Endothelial cell of umbilical vein (primary cell): ENCODE measurements at regions of chr12 and their contacts with region 1.

Region 1: GRCh38 chr12:51341259-51342007 is 5.0 kb downstream of the CELA1 start:
- DNase-seq: peak; percentile 81
- H3K4me3 ChIP-seq: peak overlapping the region in 1 of 3 experiments; percentile 13
- H3K27ac ChIP-seq: no peak overlapping the region
- H3K4me1 ChIP-seq: no peaks in the 10 kb centered on the region
- H3K27me3 ChIP-seq: no peaks in the 10 kb centered on the region
- CTCF ChIP-seq: peak; percentile 85 to 99
- POLR2A ChIP-seq: no peak

Region 2: DNA sequence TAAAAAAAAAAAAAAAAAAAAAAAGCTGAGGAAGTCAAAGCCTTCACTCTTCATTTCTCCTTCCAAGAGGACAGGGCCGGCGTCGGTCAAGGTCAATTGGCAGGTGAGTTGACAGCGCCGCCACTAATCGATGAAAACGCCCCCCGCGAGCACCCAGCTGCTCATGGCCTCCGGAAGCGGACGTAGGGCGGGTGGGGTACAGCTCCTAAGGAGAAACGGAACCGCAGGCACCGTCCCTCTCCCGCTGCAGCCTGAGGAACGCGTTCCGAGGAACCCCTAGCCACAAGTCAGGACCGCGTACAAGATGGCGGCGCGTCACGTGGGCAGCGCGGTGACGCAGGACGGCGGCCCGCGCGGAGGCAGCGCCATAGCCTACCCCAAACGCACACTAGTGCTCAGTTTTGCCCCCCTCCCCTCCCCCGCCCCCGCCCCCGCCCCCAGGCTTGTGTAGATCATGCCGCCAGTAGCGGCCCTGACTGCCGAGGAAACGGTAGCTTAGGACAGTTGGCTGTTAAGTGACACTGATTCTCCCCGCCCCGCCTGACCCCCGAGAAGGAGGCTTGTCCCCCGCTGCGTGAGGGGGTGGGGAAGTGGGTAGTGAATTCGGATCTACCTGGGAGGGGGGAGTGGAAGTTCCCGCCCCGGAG is 577.7 kb before region 1 on chr12 and contains the start of gene ATF1:
- CTCF ChIA-PET with region 1: interaction called, 35 read pairs
- POLR2A ChIA-PET with region 1: no interaction called
- dilution Hi-C with region 1: no loop called
- intact Hi-C with region 1: loop called (anchors 1 kb)
- DNase-seq: peak; percentile 93
- H3K4me3 ChIP-seq: peak within 1 kb of the TSS; percentile 56 to 88 (median 61)
- H3K27ac ChIP-seq: peak within 1 kb of the TSS; percentile 59
- H3K4me1 ChIP-seq: peaks cover 11% of the 10 kb centered on the region
- H3K27me3 ChIP-seq: no peaks in the 10 kb centered on the region
- CTCF ChIP-seq: no peak
- POLR2A ChIP-seq: peak; percentile 91
- total RNA-seq, gene ATF1: 26.7 and 26.9 TPM in 2 replicates

Region 3: GRCh38 chr12:51025836-51026638 is 315.4 kb before region 1 on chr12 and contains the start of gene SLC11A2:
- CTCF ChIA-PET with region 1: interaction called, 16 read pairs
- POLR2A ChIA-PET with region 1: no interaction called
- dilution Hi-C with region 1: no loop called
- intact Hi-C with region 1: no loop called
- DNase-seq: peak; percentile 95
- H3K4me3 ChIP-seq: peak within 1 kb of the TSS; percentile 64 to 79 (median 78)
- H3K27ac ChIP-seq: peak within 1 kb of the TSS; percentile 90
- H3K4me1 ChIP-seq: peaks cover 17% of the 10 kb centered on the region
- H3K27me3 ChIP-seq: peaks cover 5 to 7% of the 10 kb centered on the region in 2 experiments
- CTCF ChIP-seq: peak in 1 of 2 donors; percentile 31
- POLR2A ChIP-seq: peak; percentile 73
- total RNA-seq, gene SLC11A2: 41.1 and 56.4 TPM in 2 replicates

Region 4: DNA sequence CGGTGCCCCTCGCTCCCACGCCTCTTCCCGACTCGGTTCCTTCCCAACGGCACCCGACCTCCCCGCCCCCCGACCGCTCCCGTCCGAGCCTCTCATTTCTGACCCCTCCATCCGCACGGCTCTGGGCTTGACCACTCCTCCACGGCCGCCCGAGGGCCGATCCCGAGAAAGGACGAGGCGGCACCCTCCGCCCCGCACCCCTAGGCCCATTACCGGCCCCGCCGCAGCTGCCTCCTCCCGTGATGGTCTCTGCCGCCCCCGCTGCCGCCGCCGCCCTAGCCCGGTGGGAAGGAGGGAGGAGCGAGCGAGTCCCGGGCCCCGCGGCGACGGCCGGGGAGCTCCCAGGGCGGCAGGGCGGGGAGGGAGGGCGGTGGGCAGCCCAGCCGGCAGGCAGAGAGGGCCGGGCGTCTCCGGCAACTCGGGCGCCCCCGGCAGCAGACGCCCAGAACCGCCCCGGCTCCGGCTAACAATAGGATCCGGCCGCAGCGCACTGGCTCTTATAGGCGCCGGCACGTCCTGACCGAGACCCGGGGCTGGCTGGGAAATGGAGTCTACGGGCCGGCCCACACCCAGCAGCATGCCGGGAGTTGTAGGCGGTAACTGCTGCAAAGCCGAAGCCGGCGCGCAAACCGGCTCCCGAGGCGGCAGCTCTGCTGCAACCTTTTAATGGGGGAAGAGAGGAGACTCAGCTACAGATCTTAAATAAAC is 258.2 kb before region 1 on chr12 and contains the start of gene CSRNP2:
- CTCF ChIA-PET with region 1: interaction called, 10 read pairs
- POLR2A ChIA-PET with region 1: interaction called, 8 read pairs
- dilution Hi-C with region 1: no loop called
- intact Hi-C with region 1: no loop called
- DNase-seq: peak; percentile 94
- H3K4me3 ChIP-seq: peak within 1 kb of the TSS; percentile 77 to 98 (median 78)
- H3K27ac ChIP-seq: peak within 1 kb of the TSS; percentile 64
- H3K4me1 ChIP-seq: peaks cover 12% of the 10 kb centered on the region
- H3K27me3 ChIP-seq: no peaks in the 10 kb centered on the region
- CTCF ChIP-seq: peak in 1 of 2 donors; percentile 19
- POLR2A ChIP-seq: peak; percentile 100
- total RNA-seq, gene CSRNP2: 42.1 and 49.7 TPM in 2 replicates

Region 5: DNA sequence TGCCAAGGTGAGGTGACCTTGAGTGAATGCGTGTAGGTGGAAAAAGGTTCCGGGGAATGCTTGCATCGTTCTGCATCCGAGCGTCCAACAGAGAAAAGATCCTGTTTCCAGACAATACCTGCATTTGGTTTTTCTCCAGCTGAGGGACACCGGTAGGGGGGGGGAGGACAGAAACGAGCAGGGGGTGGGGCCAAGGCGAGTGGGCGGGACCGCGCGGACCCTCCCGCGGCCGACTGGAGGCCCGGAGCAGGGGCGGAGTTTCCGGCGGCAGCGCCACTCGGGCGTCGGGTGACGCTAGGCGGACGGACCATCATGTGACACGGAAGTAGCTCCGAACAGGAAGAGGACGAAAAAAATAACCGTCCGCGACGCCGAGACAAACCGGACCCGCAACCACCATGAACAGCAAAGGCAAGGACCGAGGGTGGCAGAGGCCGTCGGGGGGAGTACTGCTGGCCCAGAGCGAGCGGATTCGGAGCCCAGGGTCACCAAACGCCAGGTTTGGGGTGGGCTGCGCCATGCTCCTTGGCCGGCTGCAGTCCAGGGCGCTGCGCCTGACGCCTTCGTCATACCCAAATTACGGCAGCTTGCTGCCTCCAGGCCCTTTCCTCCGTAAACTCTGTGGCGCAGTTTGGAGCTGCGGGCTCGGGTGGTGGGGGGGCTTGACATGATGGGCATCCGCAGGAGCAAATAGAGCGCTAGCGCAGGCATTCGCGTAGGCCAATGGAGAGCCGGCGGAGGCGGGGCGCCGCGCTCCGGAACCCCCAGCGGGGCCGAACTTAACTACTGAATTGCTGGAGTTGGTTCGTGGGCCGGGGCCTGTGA is 102.7 kb before region 1 on chr12 and contains the start of gene DAZAP2:
- CTCF ChIA-PET with region 1: interaction called, 11 read pairs
- POLR2A ChIA-PET with region 1: no interaction called
- dilution Hi-C with region 1: no loop called
- intact Hi-C with region 1: no loop called
- DNase-seq: peak; percentile 96
- H3K4me3 ChIP-seq: peak within 1 kb of the TSS; percentile 11 to 97 (median 66)
- H3K27ac ChIP-seq: peak within 1 kb of the TSS; percentile 85
- H3K4me1 ChIP-seq: peaks cover 12% of the 10 kb centered on the region
- H3K27me3 ChIP-seq: no peaks in the 10 kb centered on the region
- CTCF ChIP-seq: peak in 1 of 2 donors; percentile 31
- POLR2A ChIP-seq: peak; percentile 93
- total RNA-seq, gene DAZAP2: 177 TPM in 2 replicates

Region 6: DNA sequence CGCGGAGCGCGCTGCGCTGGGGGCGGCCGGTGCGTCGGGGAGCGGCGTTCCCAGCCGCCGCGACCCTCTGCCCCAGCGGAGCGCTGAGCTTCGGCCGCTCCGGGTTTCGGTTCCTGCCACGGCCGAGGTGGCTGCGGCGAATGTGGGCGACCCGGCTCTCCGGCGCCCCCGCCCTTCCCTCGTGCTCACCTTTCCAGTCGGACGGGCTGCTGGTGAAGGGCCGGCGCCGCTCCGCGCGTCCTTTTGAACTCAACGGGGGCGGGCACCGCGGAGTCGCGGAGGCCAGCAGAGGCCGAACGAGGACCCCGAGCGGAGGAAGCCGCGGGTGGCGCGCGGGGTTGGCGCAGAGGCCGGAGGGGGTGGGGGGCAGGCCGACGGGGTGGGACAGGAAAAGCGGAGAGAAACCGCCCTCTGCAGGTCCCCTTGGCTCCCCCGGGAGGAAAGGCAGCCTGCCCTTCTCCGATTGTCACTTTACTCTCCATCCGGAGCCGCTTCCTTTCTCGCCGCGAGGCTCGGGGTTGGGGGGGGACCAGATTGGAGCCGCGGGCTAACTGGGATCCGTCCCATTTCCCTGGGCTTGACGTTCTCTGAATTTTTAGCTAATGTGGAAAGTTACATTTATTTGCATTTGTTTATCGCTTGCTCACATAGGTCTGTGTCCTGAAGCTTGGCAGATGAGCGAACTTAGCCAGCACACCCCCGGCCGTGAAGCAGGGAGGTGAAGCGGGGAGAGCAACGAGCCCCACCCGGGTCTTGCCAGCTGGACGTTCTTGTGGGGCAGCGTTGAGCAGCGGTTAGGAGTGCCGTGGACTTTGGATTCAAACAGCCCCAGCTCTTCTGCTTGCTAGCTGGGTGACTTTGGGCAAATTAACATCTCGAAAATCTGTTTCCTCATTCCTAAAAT is 71.1 kb before region 1 on chr12 and contains the start of gene SMAGP:
- CTCF ChIA-PET with region 1: interaction called, 35 read pairs
- POLR2A ChIA-PET with region 1: interaction called, 3 read pairs
- dilution Hi-C with region 1: no loop called
- intact Hi-C with region 1: loop called (anchors 1 kb)
- DNase-seq: peak; percentile 26
- H3K4me3 ChIP-seq: peak within 1 kb of the TSS; percentile 45 to 92 (median 76)
- H3K27ac ChIP-seq: peak within 1 kb of the TSS; percentile 65
- H3K4me1 ChIP-seq: peaks cover 19% of the 10 kb centered on the region
- H3K27me3 ChIP-seq: no peaks in the 10 kb centered on the region
- CTCF ChIP-seq: no peak
- POLR2A ChIP-seq: no peak
- total RNA-seq, gene SMAGP: 26.2 and 29.1 TPM in 2 replicates